Astrocyte of the cerebellum (primary cell): ENCODE measurements at regions of chr3 and their contacts with region 1.

Region 1: GRCh38 chr3:50010959-50011358 is 71.0 kb downstream of the RBM6 start:
- DNase-seq: no peak
- H3K4me3 ChIP-seq: no peak overlapping the region
- CTCF ChIP-seq: no peak

Region 2: GRCh38 chr3:49939858-49940666 is 70.9 kb before region 1 on chr3 and contains the start of gene RBM6:
- in situ Hi-C with region 1: no loop called
- DNase-seq: peak; percentile 88
- H3K4me3 ChIP-seq: peak within 1 kb of the TSS; percentile 95
- CTCF ChIP-seq: no peak

Region 3: DNA sequence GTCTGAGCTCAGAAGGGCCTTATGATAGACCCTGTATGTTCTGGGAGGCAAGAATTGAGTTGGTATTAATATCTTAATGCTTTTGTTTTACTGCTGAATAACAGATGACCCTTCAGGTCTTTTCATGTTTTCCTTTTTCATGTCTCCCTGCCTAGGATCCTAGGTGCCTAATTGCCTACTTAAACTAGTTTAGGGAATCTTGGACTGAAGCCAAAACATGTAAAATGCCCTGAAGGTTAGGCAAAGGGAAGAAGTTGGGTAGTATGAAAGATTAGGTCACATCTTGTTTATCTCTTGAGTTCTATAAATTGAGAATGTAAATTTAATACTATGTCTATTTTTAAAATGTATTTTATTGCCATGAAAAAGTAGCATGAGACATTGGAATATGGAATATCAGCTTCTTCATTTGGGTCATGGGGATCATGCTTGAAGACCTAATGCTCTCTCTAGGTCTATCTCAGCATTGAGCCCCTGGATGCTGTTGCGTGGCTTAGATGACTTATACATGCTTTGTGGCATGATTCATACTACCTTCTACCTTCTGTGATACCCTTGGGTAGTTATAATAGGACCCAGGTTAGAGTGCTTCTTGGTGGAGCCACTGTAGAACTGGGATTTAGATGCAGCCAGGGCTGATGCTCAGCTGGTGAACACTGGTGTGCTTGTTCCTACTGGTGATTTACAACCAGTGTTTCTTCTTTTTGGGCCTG is 44.6 kb before region 1 on chr3:
- in situ Hi-C with region 1: loop called (anchors 5 kb)
- DNase-seq: no peak
- H3K4me3 ChIP-seq: no peak overlapping the region
- CTCF ChIP-seq: no peak

Region 4: DNA sequence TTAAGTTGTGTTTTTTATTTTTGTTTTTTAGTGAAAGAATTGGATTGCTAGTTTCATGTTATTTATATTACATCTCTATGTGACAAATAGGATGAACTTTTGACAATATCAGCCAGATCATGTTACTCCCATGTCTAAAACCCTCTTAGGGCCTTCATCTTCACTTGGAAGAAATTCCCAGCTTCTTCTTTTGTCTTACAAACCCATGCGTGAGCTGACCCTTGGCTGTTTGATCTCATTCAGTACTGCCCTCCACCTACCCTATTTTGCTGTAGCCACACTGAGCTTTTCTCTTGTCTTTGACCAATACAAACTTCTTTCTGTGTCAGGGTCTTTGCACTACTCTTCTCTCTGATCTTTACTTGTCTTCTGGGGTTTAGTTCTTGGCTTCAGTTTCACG is 34.0 kb before region 1 on chr3:
- in situ Hi-C with region 1: no loop called
- DNase-seq: no peak
- H3K4me3 ChIP-seq: no peak overlapping the region
- CTCF ChIP-seq: no peak

Region 5: GRCh38 chr3:50044976-50045375 is 34.0 kb after region 1 on chr3:
- in situ Hi-C with region 1: loop called (anchors 5 kb)
- DNase-seq: no peak
- H3K4me3 ChIP-seq: no peak overlapping the region
- CTCF ChIP-seq: no peak

Region 6: DNA sequence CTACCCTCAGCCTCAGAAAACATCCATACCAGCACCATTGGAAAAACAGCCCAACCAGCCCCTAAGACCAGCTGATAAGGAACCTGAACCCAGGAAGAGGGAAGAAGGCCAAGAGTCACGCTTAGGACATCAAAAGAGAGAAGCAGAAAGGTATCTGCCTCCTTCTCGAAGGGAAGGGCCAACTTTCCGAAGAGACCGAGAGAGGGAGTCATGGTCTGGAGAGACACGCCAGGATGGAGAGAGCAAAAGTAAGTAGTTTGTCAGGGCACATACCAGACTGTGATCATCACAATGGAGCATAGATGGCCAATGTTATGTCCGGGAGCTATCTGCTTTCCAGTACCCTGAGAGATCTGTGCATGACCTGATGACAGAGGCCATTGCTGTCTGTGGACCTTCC is 46.8 kb after region 1 on chr3:
- in situ Hi-C with region 1: no loop called
- DNase-seq: no peak
- H3K4me3 ChIP-seq: no peak overlapping the region
- CTCF ChIP-seq: no peak